ENCODE measurements at regions of chr22 and their contacts with region 1.

Region 1: GRCh38 chr22:20079745-20080444 is at the start of gene DGCR8:
- DNase-seq: peak; percentile 24 to 92 (median 62)
- ATAC-seq: peak; percentile 89
- H3K4me3 ChIP-seq: peak within 1 kb of the TSS; percentile 76
- H3K4me3 Mint-ChIP-seq: peak within 1 kb of the TSS; percentile 99
- H3K27ac ChIP-seq: peak within 1 kb of the TSS; percentile 52 to 53
- H3K27ac Mint-ChIP-seq: peak within 1 kb of the TSS; percentile 90
- H3K4me1 ChIP-seq: peaks cover 45% of the 10 kb centered on the region
- H3K4me1 Mint-ChIP-seq: peaks cover 44% of the 10 kb centered on the region
- H3K27me3 ChIP-seq: no peaks in the 10 kb centered on the region
- H3K27me3 Mint-ChIP-seq: no peaks in the 10 kb centered on the region
- CTCF ChIP-seq: no peak
- total RNA-seq, gene DGCR8: 17.8 to 18.5 TPM

Region 2: GRCh38 chr22:19986410-19987341 is 93.2 kb before region 1 on chr22:
- CTCF ChIA-PET with region 1: interaction called, 3 read pairs
- POLR2A ChIA-PET with region 1: no interaction called
- intact Hi-C with region 1: loop called in 1 of 2 experiments (anchors 5 kb)
- DNase-seq: peak; percentile 31 to 82 (median 53)
- ATAC-seq: peak; percentile 81
- H3K4me3 ChIP-seq: peak overlapping the region; percentile 41
- H3K4me3 Mint-ChIP-seq: peak overlapping the region; percentile 68
- H3K27ac ChIP-seq: no peak overlapping the region
- H3K27ac Mint-ChIP-seq: no peak overlapping the region
- H3K4me1 ChIP-seq: peaks cover 15% of the 10 kb centered on the region
- H3K4me1 Mint-ChIP-seq: no peaks in the 10 kb centered on the region
- H3K27me3 ChIP-seq: peaks cover 0 to 2% of the 10 kb centered on the region in 2 experiments
- H3K27me3 Mint-ChIP-seq: no peaks in the 10 kb centered on the region
- CTCF ChIP-seq: no peak

Region 3: GRCh38 chr22:20027966-20028854 is 51.7 kb before region 1 on chr22:
- CTCF ChIA-PET with region 1: no interaction called
- POLR2A ChIA-PET with region 1: no interaction called
- intact Hi-C with region 1: no loop called
- DNase-seq: peak in 3 of 14 experiments; percentile 20 to 36 (median 28)
- ATAC-seq: no peak
- H3K4me3 ChIP-seq: no peak overlapping the region
- H3K4me3 Mint-ChIP-seq: no peak overlapping the region
- H3K27ac ChIP-seq: no peak overlapping the region
- H3K27ac Mint-ChIP-seq: no peak overlapping the region
- H3K4me1 ChIP-seq: peaks cover 41% of the 10 kb centered on the region
- H3K4me1 Mint-ChIP-seq: peaks cover 31% of the 10 kb centered on the region
- H3K27me3 ChIP-seq: no peaks in the 10 kb centered on the region
- H3K27me3 Mint-ChIP-seq: no peaks in the 10 kb centered on the region
- CTCF ChIP-seq: peak; percentile 24

Region 4: GRCh38 chr22:20247010-20247505 is 167.2 kb after region 1 on chr22:
- CTCF ChIA-PET with region 1: no interaction called
- POLR2A ChIA-PET with region 1: no interaction called
- intact Hi-C with region 1: no loop called
- DNase-seq: no peak
- ATAC-seq: no peak
- H3K4me3 ChIP-seq: no peak overlapping the region
- H3K4me3 Mint-ChIP-seq: no peak overlapping the region
- H3K27ac ChIP-seq: no peak overlapping the region
- H3K27ac Mint-ChIP-seq: no peak overlapping the region
- H3K4me1 ChIP-seq: peaks cover 48% of the 10 kb centered on the region
- H3K4me1 Mint-ChIP-seq: peaks cover 39% of the 10 kb centered on the region
- H3K27me3 ChIP-seq: no peaks in the 10 kb centered on the region
- H3K27me3 Mint-ChIP-seq: no peaks in the 10 kb centered on the region
- CTCF ChIP-seq: no peak